Activated naive CD4-positive, alpha-beta T cell treated with anti-CD3 and anti-CD28 coated beads for 36 hours (primary cell): ENCODE measurements at regions of chr10 and their contacts with region 1.

Region 1: DNA sequence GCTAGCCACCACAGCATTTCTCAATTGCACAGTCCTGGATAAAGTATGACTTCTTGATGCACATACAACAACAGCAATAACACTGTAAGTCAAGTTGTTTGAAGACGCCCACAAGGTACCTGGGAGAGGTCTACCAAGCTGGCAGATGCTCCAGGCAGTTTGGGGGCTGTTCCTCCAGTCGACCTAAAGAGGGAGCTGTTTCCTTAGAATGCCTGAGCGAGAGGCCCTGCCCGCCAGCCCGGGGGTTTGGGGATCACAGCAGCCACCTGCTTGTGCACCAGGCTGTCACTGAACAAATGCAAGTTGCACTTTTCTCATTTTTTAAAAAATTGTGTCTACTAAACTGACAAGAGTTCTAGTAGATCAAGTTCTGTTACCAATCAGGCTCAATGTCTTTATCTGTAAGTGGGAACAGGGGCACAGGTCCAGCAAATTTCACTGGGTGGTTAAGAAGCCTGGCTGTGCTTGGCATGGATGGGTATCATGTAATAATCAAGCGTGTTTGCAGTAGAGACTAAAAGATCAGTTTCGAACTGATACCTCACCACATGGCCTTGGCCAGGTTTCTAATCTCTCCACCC is 193.8 kb upstream of the ADO start:
- DNase-seq: peak; percentile 83
- H3K4me3 Mint-ChIP-seq: no peak overlapping the region
- H3K27ac Mint-ChIP-seq: no peak overlapping the region
- H3K4me1 Mint-ChIP-seq: peaks cover 31% of the 10 kb centered on the region
- H3K27me3 Mint-ChIP-seq: peaks cover 5% of the 10 kb centered on the region

Region 2: DNA sequence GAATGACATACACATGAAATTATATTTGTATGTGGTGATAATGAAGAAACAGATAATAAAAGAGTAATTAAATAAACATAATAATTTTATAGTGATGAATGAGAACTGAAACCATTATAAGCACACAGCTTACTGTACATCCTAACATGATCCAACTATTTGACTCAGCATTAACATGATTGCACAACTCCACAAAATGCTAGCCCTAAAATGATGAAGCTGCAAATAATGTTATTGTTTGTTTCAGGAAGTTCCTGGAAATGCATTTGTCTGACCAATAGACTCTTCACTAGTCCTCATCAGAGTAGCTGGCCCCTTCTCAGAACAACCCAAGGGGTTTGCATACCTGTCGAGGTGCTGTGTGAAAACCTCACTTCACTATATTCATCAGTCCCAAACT is 457.5 kb before region 1 on chr10:
- CTCF ChIA-PET with region 1: no interaction called
- intact Hi-C with region 1: no loop called
- DNase-seq: no peak
- H3K4me3 Mint-ChIP-seq: no peak overlapping the region
- H3K27ac Mint-ChIP-seq: no peak overlapping the region
- H3K4me1 Mint-ChIP-seq: peaks cover 5% of the 10 kb centered on the region
- H3K27me3 Mint-ChIP-seq: no peaks in the 10 kb centered on the region

Region 3: DNA sequence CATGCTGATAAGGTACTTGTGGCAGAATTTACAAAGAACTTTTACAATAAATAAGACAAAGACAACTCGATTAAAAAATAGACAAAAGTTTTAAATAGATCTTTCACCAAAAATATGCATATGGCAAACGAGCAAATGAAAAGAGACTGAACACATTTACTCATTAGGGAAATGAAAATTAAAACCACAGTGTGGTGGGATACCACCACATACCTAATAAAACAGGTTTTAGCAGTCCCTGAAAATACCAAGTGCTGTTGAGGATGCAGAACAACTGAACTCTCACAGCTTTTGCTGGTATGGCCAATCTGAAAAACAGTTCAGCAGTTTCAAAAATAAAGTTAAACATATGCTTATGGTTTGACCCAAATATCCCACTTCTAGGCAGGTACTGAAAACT is 11.6 kb before region 1 on chr10:
- CTCF ChIA-PET with region 1: interaction called, 10 read pairs
- intact Hi-C with region 1: no loop called
- DNase-seq: no peak
- H3K4me3 Mint-ChIP-seq: no peak overlapping the region
- H3K27ac Mint-ChIP-seq: no peak overlapping the region
- H3K4me1 Mint-ChIP-seq: no peaks in the 10 kb centered on the region
- H3K27me3 Mint-ChIP-seq: peaks cover 5% of the 10 kb centered on the region

Region 4: GRCh38 chr10:62831346-62831745 is 220.6 kb after region 1 on chr10:
- CTCF ChIA-PET with region 1: interaction called, 10 read pairs
- intact Hi-C with region 1: no loop called
- DNase-seq: no peak
- H3K4me3 Mint-ChIP-seq: no peak overlapping the region
- H3K27ac Mint-ChIP-seq: no peak overlapping the region
- H3K4me1 Mint-ChIP-seq: no peaks in the 10 kb centered on the region
- H3K27me3 Mint-ChIP-seq: peaks cover 5% of the 10 kb centered on the region

Region 5: DNA sequence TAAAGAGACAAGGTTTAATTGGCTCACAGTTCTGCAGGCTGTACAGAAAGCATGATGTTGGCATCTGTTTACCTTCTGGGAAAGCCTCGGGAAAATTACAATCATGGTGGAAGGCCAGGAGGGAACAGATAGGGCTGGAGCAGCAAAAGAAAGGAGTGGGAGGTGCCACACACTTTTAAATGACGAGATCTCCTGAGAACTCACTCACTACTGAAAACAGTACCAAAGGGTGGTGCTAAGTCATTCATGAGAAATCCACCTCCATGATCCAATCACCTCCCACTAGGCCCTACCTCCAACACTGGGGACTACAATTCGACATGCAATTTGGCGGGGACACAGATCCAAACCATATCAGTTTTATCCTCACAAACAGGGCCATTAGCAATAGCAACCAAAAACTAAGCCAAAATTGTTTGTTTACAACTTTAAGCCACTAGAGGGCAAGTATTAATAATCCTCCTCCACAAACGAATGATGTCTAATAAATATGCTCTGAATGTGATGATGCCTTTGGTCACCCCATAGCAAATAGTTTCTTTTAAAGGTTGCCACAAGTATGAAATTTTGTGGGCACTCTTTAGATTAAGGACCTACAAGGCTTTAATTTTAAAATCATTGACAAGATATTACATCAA is 393.2 kb after region 1 on chr10:
- CTCF ChIA-PET with region 1: no interaction called
- intact Hi-C with region 1: loop called (anchors 5 kb)
- DNase-seq: no peak
- H3K4me3 Mint-ChIP-seq: no peak overlapping the region
- H3K27ac Mint-ChIP-seq: no peak overlapping the region
- H3K4me1 Mint-ChIP-seq: no peaks in the 10 kb centered on the region
- H3K27me3 Mint-ChIP-seq: peaks cover 8% of the 10 kb centered on the region

Region 6: DNA sequence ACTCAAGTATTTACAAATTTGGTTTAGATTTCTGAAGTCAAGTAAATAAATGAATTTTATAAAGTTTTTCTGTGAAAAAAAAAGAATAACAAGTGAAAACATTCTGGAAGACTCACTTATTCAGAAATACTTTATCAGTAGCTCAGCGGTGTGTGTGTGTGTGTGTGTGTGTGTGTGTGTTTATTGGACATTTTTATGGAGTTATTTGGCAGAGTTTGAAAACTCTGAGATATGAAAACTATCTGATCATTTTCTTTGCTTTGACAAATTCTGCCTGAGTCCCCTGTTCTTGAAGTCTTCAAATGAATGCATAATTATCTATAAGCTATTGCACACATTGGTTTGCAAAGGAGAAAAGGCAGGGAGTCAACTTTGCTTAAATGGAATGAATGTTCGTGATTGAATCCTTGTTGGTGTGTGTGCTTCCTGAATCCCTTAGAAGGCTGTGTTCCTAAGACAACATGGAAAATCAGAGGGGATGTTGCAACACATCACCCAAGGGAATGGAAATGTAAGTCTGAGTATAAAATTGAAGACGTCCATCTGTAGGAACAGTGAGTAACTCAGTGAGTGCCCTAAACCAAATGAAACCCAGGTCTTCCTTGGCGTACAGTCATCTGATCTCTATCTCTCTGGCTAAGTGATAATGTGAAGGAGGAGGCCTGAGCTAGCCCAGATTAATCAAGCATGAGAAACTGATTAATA is 1071.4 kb after region 1 on chr10:
- CTCF ChIA-PET with region 1: no interaction called
- intact Hi-C with region 1: no loop called
- DNase-seq: no peak
- H3K4me3 Mint-ChIP-seq: no peak overlapping the region
- H3K27ac Mint-ChIP-seq: no peak overlapping the region
- H3K4me1 Mint-ChIP-seq: no peaks in the 10 kb centered on the region
- H3K27me3 Mint-ChIP-seq: no peaks in the 10 kb centered on the region